Left ventricle myocardium superior (tissue), 1 donor: ENCODE measurements at regions of chr17 and their contacts with region 1.

Region 1: DNA sequence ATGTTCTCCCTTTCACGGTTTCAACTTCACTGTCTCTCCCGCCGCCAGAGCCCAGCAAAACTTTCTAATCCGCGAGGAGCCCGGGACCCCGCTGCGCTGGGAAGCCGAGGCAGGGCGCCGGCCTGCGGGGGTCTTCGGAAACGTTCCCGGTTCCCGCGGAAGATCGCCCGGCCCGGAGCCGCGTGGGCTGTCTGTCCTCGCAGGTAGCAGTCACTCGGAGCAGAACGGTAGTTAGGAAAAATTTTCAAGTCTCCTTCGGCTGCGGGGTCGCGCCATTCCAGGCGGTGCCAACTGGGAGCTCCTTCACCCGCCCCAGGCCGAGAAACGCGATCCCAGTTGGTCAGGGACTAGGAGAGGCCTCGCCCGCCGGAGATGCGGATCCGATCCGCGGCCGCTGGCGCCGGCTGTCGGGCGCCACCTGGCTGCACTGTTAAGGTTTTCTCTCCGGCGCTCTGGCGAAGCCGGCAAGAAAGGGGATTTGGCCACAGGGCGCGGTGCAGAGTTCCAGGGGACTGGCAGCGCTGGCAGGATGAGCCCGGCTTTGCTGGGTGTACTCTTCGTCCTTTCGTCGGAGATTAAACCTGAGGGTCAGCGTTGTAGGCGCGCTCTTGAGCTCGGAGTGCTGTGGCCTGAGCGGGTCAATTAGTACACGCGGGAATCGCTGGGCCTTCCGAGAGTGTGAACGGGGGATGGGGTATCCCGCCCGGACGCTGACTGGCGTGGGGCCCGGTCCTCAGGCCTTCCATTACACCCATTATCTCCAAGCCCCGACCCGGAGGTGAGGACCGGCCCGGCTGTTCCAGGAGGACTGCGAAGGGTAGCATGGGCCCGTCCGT is 135.4 kb downstream of the KCNJ12 start:
- DNase-seq: peak; percentile 90
- ATAC-seq: peak; percentile 99

Region 2: GRCh38 chr17:21146362-21147015 is 365.1 kb before region 1 on chr17:
- intact Hi-C with region 1: no loop called
- DNase-seq: no peak
- ATAC-seq: no peak

Region 3: GRCh38 chr17:21268596-21269188 is 242.9 kb before region 1 on chr17:
- intact Hi-C with region 1: loop called (anchors 5 kb)
- DNase-seq: no peak
- ATAC-seq: no peak

Region 4: DNA sequence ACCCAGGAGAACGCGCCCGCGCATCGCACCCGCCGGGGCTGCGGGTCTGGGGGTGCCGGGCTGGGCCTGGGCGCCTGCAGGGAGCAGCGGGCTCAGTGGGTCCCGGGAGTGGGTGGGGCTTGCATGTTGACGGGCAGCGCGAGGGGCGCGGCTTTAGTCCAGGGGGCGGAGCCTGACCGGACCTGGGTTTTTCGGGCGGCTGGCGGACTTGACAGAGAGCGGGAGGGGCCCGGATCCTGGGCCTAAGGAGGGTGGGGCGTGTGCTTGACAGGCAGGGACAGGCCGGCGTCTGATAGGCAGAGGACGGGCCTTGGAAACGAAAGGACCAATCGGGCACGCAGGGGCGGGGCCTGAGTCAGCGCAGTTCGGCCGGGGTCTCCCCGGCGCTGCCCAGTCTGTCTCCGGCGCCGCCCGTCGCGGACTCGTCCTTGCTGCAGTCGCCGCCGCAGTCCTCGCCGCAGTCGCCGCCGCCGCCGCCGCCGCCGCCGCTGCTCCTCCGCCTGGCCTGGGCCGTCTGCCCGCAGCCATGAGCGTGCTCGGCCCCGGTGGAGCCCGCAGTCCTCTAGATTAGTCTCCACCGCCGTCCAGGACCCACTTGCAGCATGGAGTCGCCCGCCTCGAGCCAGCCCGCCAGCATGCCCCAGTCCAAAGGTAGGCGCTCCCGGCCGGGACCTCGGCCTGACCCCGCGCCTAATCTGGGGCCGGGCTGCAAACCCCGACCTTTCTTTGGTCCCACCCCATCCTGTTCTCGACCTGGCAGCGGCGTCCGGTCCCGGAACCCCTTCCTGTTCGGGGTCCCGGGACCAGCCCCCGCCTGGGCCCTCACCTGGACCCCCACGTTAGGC is 227.0 kb before region 1 on chr17 and contains the start of gene MAP2K3:
- intact Hi-C with region 1: loop called (anchors 5 kb)
- DNase-seq: peak; percentile 99
- ATAC-seq: peak; percentile 81
- total RNA-seq, gene MAP2K3: 38.6 TPM

Region 5: GRCh38 chr17:21400816-21401593 is 110.6 kb before region 1 on chr17:
- intact Hi-C with region 1: no loop called
- DNase-seq: no peak
- ATAC-seq: no peak

Region 6: GRCh38 chr17:21457051-21458026 is 54.2 kb before region 1 on chr17:
- intact Hi-C with region 1: loop called (anchors 5 kb)
- DNase-seq: peak; percentile 94
- ATAC-seq: peak; percentile 96

Region 7: DNA sequence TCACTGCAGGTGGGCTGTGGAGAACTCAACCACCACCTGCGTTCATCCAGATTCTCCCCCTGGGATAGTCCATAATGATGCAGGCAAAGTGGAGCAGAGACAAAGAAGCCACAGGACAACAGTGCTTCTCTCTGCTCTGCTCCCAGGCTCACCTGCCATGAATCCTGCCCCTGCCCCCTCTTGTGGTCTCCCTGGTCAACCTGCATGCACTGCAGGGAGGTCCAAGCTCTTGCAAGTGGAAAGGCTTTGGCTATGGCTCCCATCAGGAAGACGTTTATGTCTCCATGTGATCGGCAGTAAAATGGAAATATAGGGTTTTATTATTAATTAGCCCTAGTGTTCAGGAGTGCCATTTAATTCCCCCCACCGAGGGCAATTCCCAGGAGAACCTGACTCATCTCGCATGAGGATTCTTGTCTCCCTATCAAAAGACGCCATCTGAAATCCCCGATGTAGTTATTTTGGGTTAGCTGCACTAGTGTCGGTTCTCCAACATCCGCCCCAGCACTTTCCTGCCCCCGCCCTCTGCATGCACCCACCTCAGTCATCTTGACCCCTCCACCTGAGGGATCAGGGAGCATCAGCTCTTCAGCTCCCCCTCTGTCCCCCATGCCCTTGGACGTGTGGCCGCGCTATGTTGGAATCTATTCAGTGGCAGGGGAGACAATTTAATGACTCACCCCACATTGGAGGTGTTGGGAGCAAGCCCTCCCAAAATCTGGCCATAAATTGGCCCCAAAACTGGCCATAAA is 43.7 kb before region 1 on chr17:
- intact Hi-C with region 1: no loop called
- DNase-seq: no peak
- ATAC-seq: no peak